Stomach (tissue), 19 donors: ENCODE measurements at regions of chr6 and their contacts with region 1.

Region 1: DNA sequence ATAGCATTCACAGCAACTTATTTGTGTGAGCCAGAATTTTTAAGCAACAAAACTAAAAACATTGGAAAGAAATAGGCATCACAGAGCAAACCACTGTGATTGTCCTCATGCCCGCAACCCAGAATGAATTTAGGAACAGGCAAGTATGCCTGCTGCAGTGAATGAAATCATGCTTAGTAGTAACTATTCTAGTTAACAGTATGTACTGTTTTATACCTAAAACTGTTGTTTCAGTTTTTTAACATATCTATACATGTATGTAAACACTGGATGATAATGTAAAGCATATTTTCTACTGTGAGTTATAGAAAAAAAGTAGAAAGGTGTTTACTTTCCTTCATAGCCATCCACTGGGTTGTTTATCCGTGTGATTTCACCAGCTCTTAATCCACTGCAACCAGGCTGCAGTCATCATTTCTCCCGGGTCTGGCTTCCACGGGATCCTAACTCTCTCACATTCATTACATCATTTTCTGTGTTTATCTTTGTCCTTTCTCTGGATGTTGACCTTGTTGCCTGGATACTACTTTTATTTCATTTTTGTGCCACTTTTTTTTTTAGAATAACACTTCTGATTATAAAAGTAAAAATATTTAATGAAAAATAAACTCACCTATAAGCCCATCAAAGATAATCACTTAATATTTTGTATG is 3.6 kb upstream of the ARFGEF3 start:
- DNase-seq: peak in 1 of 2 donors; percentile 62
- H3K4me3 ChIP-seq: no peak overlapping the region
- H3K27ac ChIP-seq: no peak overlapping the region
- H3K4me1 ChIP-seq: peaks cover 9 to 21% (median 16%) of the 10 kb centered on the region in 4 donors
- H3K27me3 ChIP-seq: peaks cover 0 to 34% (median 20%) of the 10 kb centered on the region in 3 donors
- CTCF ChIP-seq: no peak
- EP300 ChIP-seq: no peak
- POLR2A ChIP-seq: no peak

Region 2: GRCh38 chr6:138231381-138231897 is 73.3 kb after region 1 on chr6:
- intact Hi-C with region 1: no loop called
- DNase-seq: peak; percentile 63 to 87
- H3K4me3 ChIP-seq: no peak overlapping the region
- H3K27ac ChIP-seq: peak overlapping the region; percentile 79 to 88 (median 83)
- H3K4me1 ChIP-seq: peaks cover 45 to 70% (median 54%) of the 10 kb centered on the region in 4 donors
- H3K27me3 ChIP-seq: no peaks in the 10 kb centered on the region
- CTCF ChIP-seq: no peak
- EP300 ChIP-seq: no peak
- POLR2A ChIP-seq: no peak

Region 3: GRCh38 chr6:138287144-138287955 is 129.2 kb after region 1 on chr6:
- intact Hi-C with region 1: loop called (anchors 10 kb)
- DNase-seq: peak; percentile 80 to 84
- H3K4me3 ChIP-seq: no peak overlapping the region
- H3K27ac ChIP-seq: no peak overlapping the region
- H3K4me1 ChIP-seq: peaks cover 0 to 6% (median 0%) of the 10 kb centered on the region in 4 donors
- H3K27me3 ChIP-seq: no peaks in the 10 kb centered on the region
- CTCF ChIP-seq: peak in 5 of 7 experiments; percentile 45 to 89 (median 64)
- EP300 ChIP-seq: no peak
- POLR2A ChIP-seq: no peak

Region 4: GRCh38 chr6:138372711-138373463 is 214.8 kb after region 1 on chr6:
- intact Hi-C with region 1: no loop called
- DNase-seq: no peak
- H3K4me3 ChIP-seq: no peak overlapping the region
- H3K27ac ChIP-seq: no peak overlapping the region
- H3K4me1 ChIP-seq: peaks cover 0 to 13% (median 0%) of the 10 kb centered on the region in 4 donors
- H3K27me3 ChIP-seq: no peaks in the 10 kb centered on the region
- CTCF ChIP-seq: no peak
- EP300 ChIP-seq: no peak
- POLR2A ChIP-seq: no peak